ENCODE measurements at regions of chr11 and their contacts with region 1.

Region 1: DNA sequence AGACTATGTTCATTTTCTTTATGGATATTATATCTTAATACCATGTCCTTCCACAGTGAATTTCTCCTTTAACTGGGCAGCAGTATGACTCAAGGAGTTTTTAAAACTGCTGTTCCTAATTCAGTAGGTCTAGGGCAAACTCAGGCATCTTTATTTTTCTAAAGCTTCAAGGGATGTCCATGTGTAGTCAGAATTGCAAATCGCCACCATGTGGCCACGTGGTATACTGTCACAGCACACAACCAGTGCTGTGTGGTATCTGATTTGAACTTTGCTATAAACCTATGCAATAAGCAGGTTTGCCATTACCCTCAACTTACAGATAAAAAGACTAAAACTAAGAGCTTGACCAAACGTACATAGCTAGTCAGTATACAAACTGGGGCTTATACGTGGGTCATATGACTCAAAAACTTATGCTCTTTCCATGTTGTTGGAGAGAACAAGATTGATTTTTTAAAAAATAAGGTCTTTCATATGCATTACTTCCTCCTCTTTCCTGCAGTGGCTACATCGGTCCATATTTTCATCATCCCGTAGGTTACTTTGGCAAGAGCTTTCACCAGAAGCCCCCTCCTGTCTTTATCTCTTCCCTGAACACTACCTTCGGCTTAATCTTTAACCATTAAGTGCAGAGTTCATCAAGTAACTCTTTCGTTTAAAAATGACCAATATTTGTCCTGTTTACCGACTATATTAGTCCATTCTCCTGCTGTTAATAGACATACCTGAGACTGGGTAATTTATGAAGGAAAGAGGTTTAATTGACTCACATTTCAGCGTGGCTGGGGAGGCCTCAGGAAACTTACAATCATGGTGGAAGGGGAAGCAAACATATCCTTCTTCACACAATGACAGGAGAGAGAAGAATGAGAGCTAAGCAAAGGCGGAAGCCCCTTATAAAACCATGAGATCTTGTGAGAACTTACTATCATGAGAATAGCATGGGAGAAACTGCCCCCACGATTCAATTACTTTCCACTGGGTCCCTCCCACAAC is 8.0 kb upstream of the HTATIP2 start:
- DNase-seq: no peak
- ATAC-seq: peak in 3 of 8 donors; percentile 54 to 72 (median 63)
- H3K4me3 ChIP-seq: no peak overlapping the region
- H3K27ac ChIP-seq: no peak overlapping the region
- H3K4me1 ChIP-seq: peaks cover 0 to 14% (median 0%) of the 10 kb centered on the region in 9 donors
- H3K27me3 ChIP-seq: peaks cover 0 to 17% (median 0%) of the 10 kb centered on the region in 7 donors
- CTCF ChIP-seq: peak; percentile 13 to 58 (median 50)

Region 2: GRCh38 chr11:19938169-19938856 is 417.2 kb before region 1 on chr11:
- intact Hi-C with region 1: loop called in 3 of 10 experiments (anchors 10 kb)
- DNase-seq: peak; percentile 29 to 31
- ATAC-seq: peak in 5 of 8 donors; percentile 50 to 61 (median 57)
- H3K4me3 ChIP-seq: no peak overlapping the region
- H3K27ac ChIP-seq: no peak overlapping the region
- H3K4me1 ChIP-seq: peaks cover 0 to 16% (median 0%) of the 10 kb centered on the region in 9 donors
- H3K27me3 ChIP-seq: no peaks in the 10 kb centered on the region
- CTCF ChIP-seq: peak; percentile 66 to 86 (median 77)

Measured in heart right ventricle (tissue), 16 donors.